ENCODE measurements at regions of chr20 and their contacts with region 1.

Region 1: DNA sequence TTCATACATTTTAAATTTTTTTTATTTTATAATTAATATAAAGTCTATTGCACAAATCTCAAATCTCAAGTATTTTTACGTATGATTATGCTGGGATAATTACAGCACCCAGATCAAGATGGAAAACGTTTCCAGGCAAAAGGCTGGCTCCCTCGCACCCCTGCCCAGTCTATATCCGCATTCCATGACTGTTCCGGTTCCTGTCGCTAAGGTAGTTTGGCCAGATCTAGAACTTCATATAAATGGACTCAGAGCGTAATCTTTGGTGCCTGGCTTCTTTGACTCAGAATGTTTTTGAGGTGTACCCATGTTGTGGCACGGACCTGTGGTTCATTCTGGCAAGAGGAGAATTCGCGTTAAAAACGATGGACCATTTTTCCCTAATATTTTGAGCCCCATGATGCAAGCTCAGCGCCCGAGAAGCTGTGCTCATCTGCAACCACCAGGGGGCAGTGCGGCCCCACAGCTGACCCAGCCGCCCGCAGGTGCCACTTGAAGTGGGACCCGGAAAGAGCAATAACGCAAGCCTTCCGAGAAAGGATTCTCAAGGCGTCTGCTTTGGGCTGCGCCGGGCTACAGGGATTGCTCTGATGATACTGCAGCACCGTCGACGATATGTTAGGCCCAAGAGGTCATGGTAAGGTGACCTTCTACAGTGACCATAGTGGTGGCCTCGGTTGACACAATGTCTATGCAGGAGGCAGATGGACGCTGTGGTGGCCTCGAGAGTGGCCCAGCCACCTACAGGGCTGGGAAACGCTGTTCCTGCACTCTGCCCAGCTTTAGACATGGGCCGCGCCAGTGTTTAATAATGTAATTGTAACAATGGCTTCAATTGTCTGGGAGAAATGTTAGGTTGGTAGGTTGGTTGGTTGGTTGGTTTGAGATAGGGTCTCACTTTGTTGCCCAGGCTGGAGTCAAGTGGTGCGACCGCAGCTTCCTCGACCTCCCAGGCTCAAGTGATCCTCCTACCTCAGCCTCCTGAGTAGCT is 160.1 kb downstream of the ZMYND8 start:
- DNase-seq: peak; percentile 91

Region 2: DNA sequence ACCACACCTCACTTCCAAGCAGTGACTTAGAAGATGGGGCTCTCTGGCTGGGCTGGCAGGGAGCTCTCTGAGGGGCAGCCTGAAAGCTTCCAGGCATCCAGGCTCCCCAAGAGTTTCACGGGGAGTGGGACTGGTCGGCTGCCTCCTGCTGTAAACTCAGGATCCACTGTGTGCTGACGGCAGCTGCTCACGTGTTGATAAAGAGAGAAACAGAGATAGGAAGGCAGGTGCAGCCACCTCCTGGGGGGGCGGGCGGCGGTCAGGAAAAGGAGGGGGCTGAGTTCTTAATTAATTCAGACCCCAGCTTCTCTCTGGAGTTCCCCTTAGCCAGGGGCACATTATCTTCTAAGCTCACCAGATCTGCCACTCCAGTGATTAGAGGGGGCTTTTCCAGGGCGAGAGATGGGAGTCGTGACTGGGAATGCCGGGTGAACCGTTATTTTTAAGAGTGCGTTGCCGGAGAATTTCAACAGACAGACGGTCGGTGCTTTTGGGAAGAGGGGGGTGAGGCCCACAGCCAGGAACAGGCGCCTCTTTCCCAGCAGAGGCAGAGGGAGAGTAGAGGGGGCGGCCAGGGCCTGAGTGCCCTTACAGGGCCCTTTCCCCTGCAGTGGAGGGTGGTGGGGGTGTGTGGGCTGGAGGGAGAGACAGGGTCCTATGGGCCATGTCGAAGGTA is 1007.4 kb before region 1 on chr20:
- intact Hi-C with region 1: no loop called
- DNase-seq: no peak

Region 3: GRCh38 chr20:47146703-47147102 is 49.7 kb before region 1 on chr20:
- intact Hi-C with region 1: no loop called
- DNase-seq: no peak

Region 4: DNA sequence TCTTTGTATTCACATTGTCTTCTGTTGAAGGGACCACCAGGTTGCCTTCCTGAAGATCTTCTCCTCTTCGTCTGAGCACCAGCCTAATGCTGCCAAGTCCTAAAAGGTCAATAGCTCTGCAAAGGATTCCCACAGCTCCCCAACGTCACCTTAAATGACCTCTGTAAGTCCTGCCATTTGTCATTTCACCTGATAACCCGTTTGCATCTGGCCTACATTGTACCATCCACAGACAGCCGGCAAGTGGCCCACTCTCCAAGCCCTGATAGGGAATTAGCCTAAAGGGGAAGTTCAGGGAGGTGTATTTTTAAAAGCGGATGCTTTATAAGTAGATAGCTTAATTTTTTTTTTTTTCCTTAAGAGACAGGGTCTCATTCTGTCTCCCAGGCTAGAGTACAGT is 32.3 kb after region 1 on chr20:
- intact Hi-C with region 1: loop called in 1 of 2 experiments (anchors 1 kb)
- DNase-seq: no peak

Region 5: DNA sequence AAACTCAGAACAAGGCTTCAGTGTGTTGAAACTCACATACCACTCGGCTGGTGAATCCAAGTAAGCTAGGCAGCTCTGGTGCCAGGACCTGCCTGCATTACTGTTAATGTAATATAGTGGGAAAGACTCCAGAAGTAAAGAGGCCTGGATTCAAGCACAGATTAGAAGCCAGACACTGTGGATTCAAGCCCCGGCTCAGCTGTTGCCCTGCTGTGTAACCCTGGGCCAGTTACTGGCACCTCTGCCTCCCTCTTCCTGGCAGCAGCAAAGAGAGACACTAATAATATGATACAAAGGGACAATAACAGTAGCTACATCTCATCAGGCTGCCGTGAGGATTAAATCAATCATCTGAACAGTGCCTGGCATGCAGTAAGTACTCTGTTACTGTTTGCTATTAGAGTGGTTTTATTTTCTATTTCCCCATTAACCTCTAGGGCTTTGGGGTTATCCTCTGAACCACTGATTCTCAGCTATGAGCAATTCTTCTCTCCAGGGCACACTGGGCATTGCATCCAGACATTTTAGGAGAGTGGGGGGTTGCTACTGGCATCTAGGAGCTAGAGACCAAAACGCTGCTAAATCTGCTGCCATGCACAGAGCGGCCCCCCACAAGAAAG is 67.2 kb after region 1 on chr20:
- intact Hi-C with region 1: no loop called
- DNase-seq: no peak

Region 6: DNA sequence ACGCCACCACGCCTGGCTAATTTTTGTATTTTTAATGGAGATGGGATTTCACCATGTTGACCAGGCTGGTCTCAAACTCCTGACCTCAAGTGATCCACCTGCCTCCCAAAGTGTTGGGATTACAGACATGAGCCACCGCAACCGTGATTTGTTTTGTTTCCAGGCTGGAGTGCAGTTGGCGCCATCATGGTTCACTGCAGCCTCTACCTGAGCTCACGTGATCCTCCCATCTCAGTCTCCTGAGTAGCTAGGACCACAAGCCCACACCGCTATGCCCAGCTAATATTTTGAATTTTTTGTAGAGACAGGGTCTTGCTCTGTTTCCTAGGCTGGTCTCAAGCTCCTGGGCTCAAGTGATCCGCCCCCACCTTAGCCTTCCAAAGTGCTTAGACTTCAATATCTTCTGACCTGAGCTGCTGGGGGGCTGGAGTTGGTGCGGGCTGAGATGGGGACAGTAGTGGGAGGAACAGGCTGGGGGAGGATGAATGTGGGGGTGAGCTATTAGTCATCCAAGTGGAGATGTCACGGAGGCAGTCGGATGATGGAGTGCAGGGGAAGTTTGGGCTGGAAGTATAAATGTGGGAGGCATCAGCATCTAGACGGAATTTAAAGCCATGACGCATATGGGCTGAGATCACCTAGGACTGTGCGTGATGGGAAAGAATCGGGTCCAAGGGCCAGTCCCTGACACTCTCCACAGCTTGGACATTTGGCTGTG is 183.2 kb after region 1 on chr20:
- intact Hi-C with region 1: loop called in 1 of 2 experiments (anchors 5 kb)
- DNase-seq: no peak

Measured in posterior vena cava (tissue), 2 donors.